ENCODE measurements at regions of chr9 and their contacts with region 1.

Region 1: GRCh38 chr9:113657703-113658544 is 194.4 kb downstream of the RGS3 start:
- DNase-seq: peak; percentile 89
- H3K4me3 ChIP-seq: no peak overlapping the region
- H3K27ac ChIP-seq: no peak overlapping the region
- H3K4me1 ChIP-seq: peaks cover 45% of the 10 kb centered on the region
- H3K27me3 ChIP-seq: peaks cover 0 to 8% of the 10 kb centered on the region in 2 experiments
- CTCF ChIP-seq: peak; percentile 92 to 96
- POLR2A ChIP-seq: no peak

Region 2: DNA sequence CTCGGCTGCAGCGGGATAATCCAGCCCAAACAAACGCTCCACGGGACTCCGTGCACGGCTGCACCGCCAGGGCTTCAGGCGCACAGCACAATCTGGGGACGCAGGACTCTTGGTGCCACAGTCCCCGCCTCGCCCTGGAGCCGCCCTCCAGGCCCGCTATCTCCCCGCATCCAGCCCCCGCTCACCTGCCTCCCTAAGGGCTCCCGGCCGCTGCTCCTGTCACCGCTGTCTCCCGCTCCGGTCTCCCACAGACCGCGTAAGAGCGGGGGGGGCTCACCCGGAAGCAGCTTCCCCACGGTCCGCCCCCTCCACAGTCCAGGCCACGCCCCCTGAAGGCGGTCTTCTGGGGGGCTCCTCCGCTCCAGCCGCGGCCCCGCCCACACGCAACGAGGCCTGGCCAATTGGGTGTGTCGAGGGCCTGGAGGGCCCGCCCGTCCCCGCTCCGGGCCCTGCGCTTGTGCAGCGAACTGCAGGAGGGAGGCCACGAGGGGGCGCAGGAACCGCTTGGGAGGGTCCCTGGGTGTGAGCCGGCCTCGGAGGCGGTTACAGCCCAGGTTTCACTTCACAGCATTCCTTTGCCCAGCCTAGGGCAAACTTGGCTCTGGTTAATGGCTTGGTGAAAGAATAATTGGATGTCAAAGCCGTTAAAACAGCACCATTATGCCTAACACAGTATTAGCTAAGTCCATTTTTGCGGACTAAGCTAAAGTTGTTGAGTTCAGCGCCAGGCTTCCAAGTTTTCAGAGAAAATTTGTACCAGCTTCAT is 256.7 kb before region 1 on chr9 and contains the start of gene ALAD:
- CTCF ChIA-PET with region 1: interaction called, 50 read pairs
- POLR2A ChIA-PET with region 1: no interaction called
- dilution Hi-C with region 1: no loop called
- intact Hi-C with region 1: loop called (anchors 1 kb)
- DNase-seq: peak; percentile 99
- H3K4me3 ChIP-seq: peak within 1 kb of the TSS; percentile 48 to 84 (median 51)
- H3K27ac ChIP-seq: no peak within 1 kb of the TSS
- H3K4me1 ChIP-seq: peaks cover 24% of the 10 kb centered on the region
- H3K27me3 ChIP-seq: no peaks in the 10 kb centered on the region
- CTCF ChIP-seq: peak; percentile 99
- POLR2A ChIP-seq: peak; percentile 68
- total RNA-seq, gene ALAD: 29.5 TPM in 2 replicates

Region 3: DNA sequence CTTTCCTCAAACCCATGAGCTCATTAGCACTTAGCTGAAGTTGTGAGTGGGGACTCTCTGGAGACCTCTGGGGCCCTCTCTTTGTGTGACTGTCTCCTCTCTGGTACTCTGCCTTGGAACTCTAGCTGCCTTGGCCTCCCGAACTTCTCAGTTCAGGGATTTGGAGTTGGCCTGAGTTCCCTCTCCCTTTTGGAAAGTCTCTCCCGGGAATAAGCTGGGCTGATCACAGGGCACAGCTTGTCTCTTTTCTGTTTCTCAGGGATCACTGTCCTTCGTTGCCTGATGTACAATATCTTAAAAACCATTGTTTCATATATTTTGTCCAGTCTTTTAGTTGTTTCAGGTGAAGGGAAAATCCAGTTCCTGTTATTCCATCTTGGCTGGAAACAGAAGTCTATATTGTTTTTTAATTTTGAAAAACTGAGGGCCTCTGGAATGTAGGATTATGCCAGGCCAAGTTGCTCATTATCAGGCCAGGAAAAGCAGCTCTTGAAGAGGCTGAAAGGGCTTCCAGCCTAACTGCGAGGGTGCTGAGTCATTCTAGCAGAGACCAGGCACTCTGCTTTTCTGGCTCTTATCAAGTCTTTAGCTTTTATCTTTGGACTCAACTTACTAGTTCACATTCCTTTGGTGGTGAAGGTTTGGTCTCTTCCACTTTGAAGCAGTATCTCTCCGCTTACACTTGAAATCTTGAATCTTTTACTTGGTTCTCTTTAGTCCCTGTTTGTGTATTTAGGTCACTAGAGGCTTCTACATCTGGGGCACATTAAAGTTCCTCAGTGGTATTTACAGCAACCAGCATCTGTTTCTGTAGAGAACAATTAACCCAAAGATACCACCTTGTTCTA is 202.8 kb before region 1 on chr9:
- CTCF ChIA-PET with region 1: interaction called, 38 read pairs
- POLR2A ChIA-PET with region 1: interaction called, 5 read pairs
- dilution Hi-C with region 1: no loop called
- intact Hi-C with region 1: loop called (anchors 2 kb)
- DNase-seq: peak; percentile 97
- H3K4me3 ChIP-seq: no peak overlapping the region
- H3K27ac ChIP-seq: peak overlapping the region; percentile 94
- H3K4me1 ChIP-seq: peaks cover 22% of the 10 kb centered on the region
- H3K27me3 ChIP-seq: no peaks in the 10 kb centered on the region
- CTCF ChIP-seq: no peak
- POLR2A ChIP-seq: no peak

Region 4: GRCh38 chr9:113541019-113541900 is 116.7 kb before region 1 on chr9:
- CTCF ChIA-PET with region 1: interaction called, 14 read pairs
- POLR2A ChIA-PET with region 1: no interaction called
- dilution Hi-C with region 1: no loop called
- intact Hi-C with region 1: loop called (anchors 5 kb)
- DNase-seq: peak; percentile 42
- H3K4me3 ChIP-seq: no peak overlapping the region
- H3K27ac ChIP-seq: no peak overlapping the region
- H3K4me1 ChIP-seq: peaks cover 5% of the 10 kb centered on the region
- H3K27me3 ChIP-seq: no peaks in the 10 kb centered on the region
- CTCF ChIP-seq: no peak
- POLR2A ChIP-seq: peak; percentile 10

Region 5: DNA sequence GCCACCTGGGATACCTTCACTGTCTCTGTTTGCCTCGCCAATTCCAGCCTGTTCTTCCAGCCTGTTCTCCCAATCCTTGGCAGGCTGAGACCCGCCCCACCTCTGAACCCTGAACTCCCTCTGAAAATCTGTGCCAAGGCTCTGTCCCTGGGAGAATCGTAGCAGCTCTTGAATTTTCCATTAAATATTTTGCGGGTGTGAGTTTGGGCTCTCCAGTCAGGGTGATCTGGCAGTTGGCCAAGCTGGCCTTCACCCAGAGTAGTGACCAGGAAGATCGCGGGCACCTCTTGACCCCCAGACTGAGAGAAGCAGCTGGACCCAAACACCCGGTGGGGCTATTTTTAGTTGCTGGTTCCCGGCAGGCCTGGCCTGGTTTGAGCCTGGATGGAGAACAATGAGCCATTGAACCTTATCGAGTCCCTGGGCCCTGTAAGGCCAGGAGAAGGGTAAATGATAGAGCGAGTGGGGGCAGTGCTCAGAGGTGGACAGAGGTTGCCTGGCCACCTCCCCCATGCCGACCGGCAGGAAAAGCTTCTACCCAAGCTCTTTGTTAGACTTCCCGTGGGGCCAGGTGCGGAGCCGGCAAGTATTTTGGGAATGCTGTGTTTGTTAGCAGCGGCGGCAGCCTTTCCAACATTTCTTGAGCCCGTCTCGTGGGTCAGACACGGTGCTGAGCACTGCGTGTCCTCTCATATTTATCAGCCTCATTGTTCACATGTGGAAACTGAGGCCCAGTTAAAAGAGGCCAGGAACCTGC is 48.2 kb before region 1 on chr9:
- CTCF ChIA-PET with region 1: interaction called, 56 read pairs
- POLR2A ChIA-PET with region 1: interaction called, 19 read pairs
- dilution Hi-C with region 1: no loop called
- intact Hi-C with region 1: loop called (anchors 1 kb)
- DNase-seq: peak; percentile 96
- H3K4me3 ChIP-seq: no peak overlapping the region
- H3K27ac ChIP-seq: peak overlapping the region; percentile 98
- H3K4me1 ChIP-seq: peaks cover 26% of the 10 kb centered on the region
- H3K27me3 ChIP-seq: no peaks in the 10 kb centered on the region
- CTCF ChIP-seq: no peak
- POLR2A ChIP-seq: no peak

Region 6: GRCh38 chr9:113632776-113633590 is 24.9 kb before region 1 on chr9:
- CTCF ChIA-PET with region 1: interaction called, 24 read pairs
- POLR2A ChIA-PET with region 1: interaction called, 12 read pairs
- dilution Hi-C with region 1: no loop called
- intact Hi-C with region 1: loop called (anchors 1 kb)
- DNase-seq: no peak
- H3K4me3 ChIP-seq: no peak overlapping the region
- H3K27ac ChIP-seq: no peak overlapping the region
- H3K4me1 ChIP-seq: peaks cover 22% of the 10 kb centered on the region
- H3K27me3 ChIP-seq: no peaks in the 10 kb centered on the region
- CTCF ChIP-seq: no peak
- POLR2A ChIP-seq: no peak

Region 7: GRCh38 chr9:113682297-113682771 is 24.4 kb after region 1 on chr9:
- CTCF ChIA-PET with region 1: interaction called, 12 read pairs
- POLR2A ChIA-PET with region 1: no interaction called
- dilution Hi-C with region 1: no loop called
- intact Hi-C with region 1: no loop called
- DNase-seq: peak; percentile 85
- H3K4me3 ChIP-seq: no peak overlapping the region
- H3K27ac ChIP-seq: no peak overlapping the region
- H3K4me1 ChIP-seq: no peaks in the 10 kb centered on the region
- H3K27me3 ChIP-seq: peaks cover 9 to 11% of the 10 kb centered on the region in 2 experiments
- CTCF ChIP-seq: peak; percentile 92 to 95
- POLR2A ChIP-seq: no peak